GM12878 (cell line): ENCODE measurements at regions of chr20 and their contacts with region 1.

Region 1: DNA sequence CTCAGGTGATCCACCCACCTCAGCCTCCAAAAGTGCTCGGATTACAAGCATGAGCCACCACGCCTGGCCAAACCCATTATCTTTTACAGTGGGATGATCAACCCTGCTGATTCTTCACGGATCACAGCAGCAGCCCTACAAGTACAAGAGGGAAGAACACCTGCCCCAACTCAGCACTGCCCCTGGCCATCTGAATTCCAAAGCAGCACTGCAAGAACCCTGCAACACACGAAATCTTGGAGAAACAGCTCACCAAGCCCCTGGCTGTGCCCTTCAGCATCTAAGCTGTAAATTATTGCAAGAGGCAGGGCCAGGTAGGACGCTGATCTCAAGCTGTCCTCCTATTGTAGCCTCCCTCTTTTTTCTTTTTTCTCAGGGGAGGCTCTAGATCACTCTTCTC is 54.5 kb upstream of the MC3R start:
- DNase-seq: no peak
- ATAC-seq: no peak
- H3K4me3 ChIP-seq: no peak overlapping the region
- H3K27ac ChIP-seq: no peak overlapping the region
- H3K4me1 ChIP-seq: no peaks in the 10 kb centered on the region
- H3K27me3 ChIP-seq: no peaks in the 10 kb centered on the region
- CTCF ChIP-seq: no peak
- EP300 ChIP-seq: no peak
- POLR2A ChIP-seq: no peak
- RAD21 ChIP-seq: no peak

Region 2: GRCh38 chr20:55947701-55948100 is 246.4 kb before region 1 on chr20:
- CTCF ChIA-PET with region 1: no interaction called
- POLR2A ChIA-PET with region 1: no interaction called
- RAD21 ChIA-PET with region 1: no interaction called
- SMC1A ChIA-PET with region 1: no interaction called
- in situ Hi-C with region 1: no loop called
- intact Hi-C with region 1: no loop called
- DNase-seq: no peak
- ATAC-seq: no peak
- H3K4me3 ChIP-seq: no peak overlapping the region
- H3K27ac ChIP-seq: no peak overlapping the region
- H3K4me1 ChIP-seq: no peaks in the 10 kb centered on the region
- H3K27me3 ChIP-seq: no peaks in the 10 kb centered on the region
- CTCF ChIP-seq: no peak
- EP300 ChIP-seq: no peak
- POLR2A ChIP-seq: no peak
- RAD21 ChIP-seq: no peak

Region 3: GRCh38 chr20:56121850-56122249 is 72.2 kb before region 1 on chr20:
- CTCF ChIA-PET with region 1: no interaction called
- POLR2A ChIA-PET with region 1: no interaction called
- RAD21 ChIA-PET with region 1: no interaction called
- SMC1A ChIA-PET with region 1: no interaction called
- in situ Hi-C with region 1: no loop called
- intact Hi-C with region 1: no loop called
- DNase-seq: no peak
- ATAC-seq: no peak
- H3K4me3 ChIP-seq: no peak overlapping the region
- H3K27ac ChIP-seq: no peak overlapping the region
- H3K4me1 ChIP-seq: no peaks in the 10 kb centered on the region
- H3K27me3 ChIP-seq: no peaks in the 10 kb centered on the region
- CTCF ChIP-seq: no peak
- EP300 ChIP-seq: no peak
- POLR2A ChIP-seq: no peak
- RAD21 ChIP-seq: no peak

Region 4: DNA sequence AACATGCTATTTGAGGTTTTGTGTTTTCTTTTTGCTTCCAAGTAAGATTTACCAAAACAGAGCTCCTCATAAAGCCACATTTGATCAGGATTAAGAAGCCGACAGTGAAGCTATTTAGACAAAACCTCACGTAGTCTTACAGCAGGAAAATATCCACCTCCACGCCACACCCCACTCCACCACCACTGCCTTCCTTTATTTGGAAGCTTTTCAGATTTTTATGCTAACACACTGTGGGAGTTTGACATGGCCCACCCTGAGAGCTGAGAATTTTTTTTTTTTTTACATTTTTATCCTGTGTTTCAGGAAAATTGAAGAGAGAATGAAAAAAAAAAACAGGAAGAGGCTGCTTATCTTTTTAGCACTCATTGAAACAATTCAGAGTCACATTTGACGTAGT is 50.3 kb before region 1 on chr20:
- CTCF ChIA-PET with region 1: no interaction called
- POLR2A ChIA-PET with region 1: no interaction called
- RAD21 ChIA-PET with region 1: no interaction called
- SMC1A ChIA-PET with region 1: no interaction called
- in situ Hi-C with region 1: loop called (anchors 5 kb)
- intact Hi-C with region 1: no loop called
- DNase-seq: no peak
- ATAC-seq: no peak
- H3K4me3 ChIP-seq: no peak overlapping the region
- H3K27ac ChIP-seq: no peak overlapping the region
- H3K4me1 ChIP-seq: no peaks in the 10 kb centered on the region
- H3K27me3 ChIP-seq: no peaks in the 10 kb centered on the region
- CTCF ChIP-seq: no peak
- EP300 ChIP-seq: no peak
- POLR2A ChIP-seq: no peak
- RAD21 ChIP-seq: no peak

Region 5: GRCh38 chr20:56443654-56444540 is 249.8 kb after region 1 on chr20:
- CTCF ChIA-PET with region 1: no interaction called
- POLR2A ChIA-PET with region 1: no interaction called
- RAD21 ChIA-PET with region 1: no interaction called
- SMC1A ChIA-PET with region 1: no interaction called
- in situ Hi-C with region 1: no loop called
- intact Hi-C with region 1: no loop called
- DNase-seq: no peak
- ATAC-seq: no peak
- H3K4me3 ChIP-seq: no peak overlapping the region
- H3K27ac ChIP-seq: no peak overlapping the region
- H3K4me1 ChIP-seq: peaks cover 20% of the 10 kb centered on the region
- H3K27me3 ChIP-seq: no peaks in the 10 kb centered on the region
- CTCF ChIP-seq: no peak
- EP300 ChIP-seq: no peak
- POLR2A ChIP-seq: no peak
- RAD21 ChIP-seq: no peak